H1 (cell line): ENCODE measurements at regions of chr3 and their contacts with region 1.

Region 1: DNA sequence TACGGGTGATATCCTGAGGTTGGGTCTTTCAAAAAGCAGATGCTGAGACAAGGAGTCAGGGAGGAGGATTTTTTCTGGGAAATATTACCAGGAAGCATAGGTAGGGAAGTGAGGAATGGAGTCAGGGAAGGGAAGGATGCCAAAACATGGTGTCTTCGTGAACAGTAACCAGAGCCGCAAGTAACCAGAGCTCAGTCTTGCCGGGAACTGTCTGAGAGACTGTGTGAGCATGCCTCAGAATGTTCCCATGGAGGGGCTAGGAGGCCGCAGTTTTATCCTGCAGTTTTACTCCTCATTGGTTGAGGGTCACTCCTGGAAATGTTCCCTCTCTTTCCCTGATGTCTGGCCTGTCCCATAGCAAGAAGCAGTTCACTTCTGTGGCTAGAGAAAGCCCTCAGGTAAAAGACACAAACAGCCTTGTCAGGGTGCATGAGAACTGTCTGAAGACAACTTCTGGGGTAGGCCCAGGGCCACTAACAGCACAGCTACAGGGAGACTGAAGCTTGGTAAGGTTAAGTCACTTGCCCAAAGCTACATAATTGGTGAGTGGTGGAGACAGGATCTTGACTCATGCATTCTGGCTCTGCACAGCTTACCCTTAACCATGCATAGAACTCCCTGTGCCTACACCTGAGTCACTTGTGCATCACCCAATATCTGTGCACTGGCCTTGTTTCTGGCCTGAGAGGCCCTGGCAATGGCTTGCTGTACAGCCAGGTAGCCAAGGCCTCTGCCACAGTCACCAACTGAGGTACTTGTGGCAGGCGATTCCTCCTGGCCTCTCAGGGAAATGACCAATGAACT is 76.3 kb upstream of the FRMD4B start:
- DNase-seq: no peak
- H3K4me3 ChIP-seq: no peak overlapping the region
- H3K27ac ChIP-seq: no peak overlapping the region
- H3K4me1 ChIP-seq: no peaks in the 10 kb centered on the region
- H3K27me3 ChIP-seq: no peaks in the 10 kb centered on the region
- CTCF ChIP-seq: no peak
- EP300 ChIP-seq: no peak
- POLR2A ChIP-seq: no peak
- RAD21 ChIP-seq: no peak

Region 2: GRCh38 chr3:69451594-69451993 is 10.6 kb before region 1 on chr3:
- CTCF ChIA-PET with region 1: interaction called, 20 read pairs
- POLR2A ChIA-PET with region 1: no interaction called
- DNase-seq: no peak
- H3K4me3 ChIP-seq: no peak overlapping the region
- H3K27ac ChIP-seq: no peak overlapping the region
- H3K4me1 ChIP-seq: no peaks in the 10 kb centered on the region
- H3K27me3 ChIP-seq: no peaks in the 10 kb centered on the region
- CTCF ChIP-seq: peak in 2 of 3 experiments; percentile 15 to 36; a peak in 1 of 4 replicates
- EP300 ChIP-seq: no peak
- POLR2A ChIP-seq: no peak
- RAD21 ChIP-seq: peak; percentile 13 to 23; a peak in 2 of 4 replicates